Endothelial cell of umbilical vein (primary cell): ENCODE measurements at regions of chrX and their contacts with region 1.

Region 1: GRCh38 chrX:30141966-30142365 is 73.4 kb upstream of the MAGEB2 start:
- DNase-seq: peak; percentile 35
- H3K4me3 ChIP-seq: no peak overlapping the region
- H3K27ac ChIP-seq: no peak overlapping the region
- H3K4me1 ChIP-seq: no peaks in the 10 kb centered on the region
- H3K27me3 ChIP-seq: no peaks in the 10 kb centered on the region
- CTCF ChIP-seq: peak in 1 of 2 donors; percentile 26
- POLR2A ChIP-seq: no peak

Region 2: GRCh38 chrX:30308263-30309138 is 166.5 kb after region 1 on chrX:
- CTCF ChIA-PET with region 1: no interaction called
- POLR2A ChIA-PET with region 1: no interaction called
- dilution Hi-C with region 1: no loop called
- intact Hi-C with region 1: loop called (anchors 5 kb)
- DNase-seq: peak; percentile 4
- H3K4me3 ChIP-seq: no peak overlapping the region
- H3K27ac ChIP-seq: no peak overlapping the region
- H3K4me1 ChIP-seq: peaks cover 4% of the 10 kb centered on the region
- H3K27me3 ChIP-seq: peaks cover 5 to 10% of the 10 kb centered on the region in 2 experiments
- CTCF ChIP-seq: peak; percentile 29 to 36
- POLR2A ChIP-seq: no peak

Region 3: GRCh38 chrX:30504309-30504708 is 362.3 kb after region 1 on chrX:
- CTCF ChIA-PET with region 1: interaction called, 7 read pairs
- POLR2A ChIA-PET with region 1: no interaction called
- dilution Hi-C with region 1: no loop called
- intact Hi-C with region 1: loop called (anchors 1 kb)
- DNase-seq: peak; percentile 46
- H3K4me3 ChIP-seq: no peak overlapping the region
- H3K27ac ChIP-seq: no peak overlapping the region
- H3K4me1 ChIP-seq: no peaks in the 10 kb centered on the region
- H3K27me3 ChIP-seq: peaks cover 0 to 3% of the 10 kb centered on the region in 2 experiments
- CTCF ChIP-seq: peak in 1 of 2 donors; percentile 8
- POLR2A ChIP-seq: no peak

Region 4: DNA sequence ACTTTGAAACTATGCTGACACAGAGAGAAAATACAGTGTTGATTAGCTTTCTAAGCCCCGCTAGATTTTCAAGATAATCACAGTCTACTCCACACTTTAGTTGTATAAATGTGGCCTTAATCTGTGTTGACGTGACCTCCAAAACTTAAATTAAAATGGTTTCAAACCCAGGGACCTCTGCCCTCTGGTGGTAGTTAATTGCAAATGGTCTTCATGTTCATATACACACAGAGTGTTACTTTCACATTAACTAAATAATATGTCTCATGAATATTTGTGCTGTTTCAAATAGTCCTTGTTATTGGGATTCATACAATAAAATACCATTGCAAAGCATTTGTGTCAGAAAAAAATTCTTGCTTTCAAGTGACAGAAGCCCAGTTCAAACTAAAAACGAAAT is 371.3 kb after region 1 on chrX:
- CTCF ChIA-PET with region 1: interaction called, 10 read pairs
- POLR2A ChIA-PET with region 1: no interaction called
- dilution Hi-C with region 1: no loop called
- intact Hi-C with region 1: no loop called
- DNase-seq: peak; percentile 2
- H3K4me3 ChIP-seq: no peak overlapping the region
- H3K27ac ChIP-seq: no peak overlapping the region
- H3K4me1 ChIP-seq: no peaks in the 10 kb centered on the region
- H3K27me3 ChIP-seq: no peaks in the 10 kb centered on the region
- CTCF ChIP-seq: peak in 1 of 2 donors; percentile 23
- POLR2A ChIP-seq: no peak

Region 5: DNA sequence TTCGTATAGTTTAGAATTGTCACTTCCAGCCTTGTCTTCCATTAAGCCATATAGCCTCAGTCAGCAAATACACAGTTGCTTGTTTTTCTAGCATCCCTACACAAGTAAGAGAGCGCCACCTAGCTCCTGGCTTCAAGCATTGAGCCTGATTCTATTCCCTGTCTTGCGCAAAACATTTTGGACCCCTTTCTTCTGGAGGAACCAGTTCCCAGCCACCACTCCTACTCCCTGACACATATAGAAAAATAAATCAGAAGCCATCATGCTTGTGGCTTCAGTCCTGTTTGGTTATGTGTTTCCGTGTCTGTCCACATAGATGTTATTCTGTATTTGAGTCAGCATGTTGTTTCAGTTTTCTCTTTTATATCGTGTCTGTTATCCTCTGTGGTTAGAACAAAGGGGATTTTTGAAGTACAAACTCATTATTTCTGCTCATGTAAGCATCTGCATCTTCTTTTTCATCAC is 571.1 kb after region 1 on chrX:
- CTCF ChIA-PET with region 1: no interaction called
- POLR2A ChIA-PET with region 1: no interaction called
- dilution Hi-C with region 1: no loop called
- intact Hi-C with region 1: loop called (anchors 2 kb)
- DNase-seq: peak; percentile 45
- H3K4me3 ChIP-seq: no peak overlapping the region
- H3K27ac ChIP-seq: no peak overlapping the region
- H3K4me1 ChIP-seq: no peaks in the 10 kb centered on the region
- H3K27me3 ChIP-seq: no peaks in the 10 kb centered on the region
- CTCF ChIP-seq: peak; percentile 40 to 56
- POLR2A ChIP-seq: no peak